Cardiac septum (tissue), 1 donor: ENCODE measurements at regions of chr7 and their contacts with region 1.

Region 1: DNA sequence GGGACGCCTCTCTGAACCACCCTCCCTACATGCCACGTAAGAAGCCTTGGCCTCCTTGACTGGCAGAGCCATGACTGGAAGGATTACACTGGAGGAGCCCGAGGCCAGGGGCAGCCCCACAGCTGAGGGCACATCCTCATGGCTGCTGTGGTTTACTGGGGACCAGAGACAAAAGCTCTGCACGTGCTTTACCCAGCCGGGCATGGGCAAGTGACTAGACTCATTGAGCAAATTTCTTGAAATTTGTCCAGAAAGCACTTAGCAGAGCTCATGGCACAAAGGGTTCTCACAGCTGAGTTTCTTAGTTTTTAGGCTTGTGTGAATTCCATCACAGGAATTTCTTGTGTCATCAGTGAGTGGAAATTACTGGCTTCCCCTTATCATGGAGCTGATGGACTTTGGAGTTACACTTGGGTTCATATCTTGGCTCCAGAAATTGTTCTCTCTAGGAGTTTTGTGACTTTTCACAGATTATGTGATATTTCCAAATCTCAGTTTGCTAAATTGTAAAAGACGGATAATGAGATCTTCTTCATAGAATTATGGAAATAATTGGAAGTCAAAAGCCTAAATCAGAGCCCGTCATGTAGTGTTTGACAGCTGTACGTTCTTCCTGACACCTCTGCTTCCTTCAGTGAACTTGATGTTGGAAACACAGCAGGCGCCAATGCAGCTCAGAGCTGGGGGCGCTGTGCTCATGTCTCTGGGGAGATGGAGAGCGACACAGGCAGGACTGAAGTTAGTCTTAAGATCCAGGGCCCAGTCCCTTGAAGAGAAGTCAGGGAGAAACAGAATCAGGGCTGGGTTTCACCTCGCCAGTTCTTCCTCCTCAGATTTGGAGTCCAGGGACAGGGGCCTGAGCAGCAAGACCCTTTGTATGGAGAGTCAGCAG is 47.7 kb upstream of the MGAM2 start:
- DNase-seq: no peak

Region 2: GRCh38 chr7:142088022-142088714 is 24.4 kb after region 1 on chr7:
- intact Hi-C with region 1: loop called (anchors 2 kb)
- DNase-seq: no peak

Region 3: GRCh38 chr7:142094861-142095260 is 31.1 kb after region 1 on chr7:
- intact Hi-C with region 1: loop called (anchors 1 kb)
- DNase-seq: no peak